Cardiac septum (tissue), 1 donor: ENCODE measurements at regions of chr17 and their contacts with region 1.

Region 1: DNA sequence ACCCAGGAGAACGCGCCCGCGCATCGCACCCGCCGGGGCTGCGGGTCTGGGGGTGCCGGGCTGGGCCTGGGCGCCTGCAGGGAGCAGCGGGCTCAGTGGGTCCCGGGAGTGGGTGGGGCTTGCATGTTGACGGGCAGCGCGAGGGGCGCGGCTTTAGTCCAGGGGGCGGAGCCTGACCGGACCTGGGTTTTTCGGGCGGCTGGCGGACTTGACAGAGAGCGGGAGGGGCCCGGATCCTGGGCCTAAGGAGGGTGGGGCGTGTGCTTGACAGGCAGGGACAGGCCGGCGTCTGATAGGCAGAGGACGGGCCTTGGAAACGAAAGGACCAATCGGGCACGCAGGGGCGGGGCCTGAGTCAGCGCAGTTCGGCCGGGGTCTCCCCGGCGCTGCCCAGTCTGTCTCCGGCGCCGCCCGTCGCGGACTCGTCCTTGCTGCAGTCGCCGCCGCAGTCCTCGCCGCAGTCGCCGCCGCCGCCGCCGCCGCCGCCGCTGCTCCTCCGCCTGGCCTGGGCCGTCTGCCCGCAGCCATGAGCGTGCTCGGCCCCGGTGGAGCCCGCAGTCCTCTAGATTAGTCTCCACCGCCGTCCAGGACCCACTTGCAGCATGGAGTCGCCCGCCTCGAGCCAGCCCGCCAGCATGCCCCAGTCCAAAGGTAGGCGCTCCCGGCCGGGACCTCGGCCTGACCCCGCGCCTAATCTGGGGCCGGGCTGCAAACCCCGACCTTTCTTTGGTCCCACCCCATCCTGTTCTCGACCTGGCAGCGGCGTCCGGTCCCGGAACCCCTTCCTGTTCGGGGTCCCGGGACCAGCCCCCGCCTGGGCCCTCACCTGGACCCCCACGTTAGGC is at the start of gene MAP2K3:
- DNase-seq: peak; percentile 100
- total RNA-seq, gene MAP2K3: 70.5 TPM

Region 2: GRCh38 chr17:21043286-21044232 is 241.0 kb before region 1 on chr17:
- intact Hi-C with region 1: loop called (anchors 2 kb)
- DNase-seq: peak; percentile 98

Region 3: GRCh38 chr17:21126645-21127510 is 157.7 kb before region 1 on chr17 and contains the start of gene DHRS7B:
- intact Hi-C with region 1: loop called (anchors 5 kb)
- DNase-seq: peak; percentile 98
- total RNA-seq, gene DHRS7B: 37.4 TPM

Region 4: GRCh38 chr17:21166595-21167210 is 117.8 kb before region 1 on chr17:
- intact Hi-C with region 1: loop called (anchors 2 kb)
- DNase-seq: no peak

Region 5: GRCh38 chr17:21318439-21318838 is 33.9 kb after region 1 on chr17:
- intact Hi-C with region 1: loop called (anchors 5 kb)
- DNase-seq: no peak

Region 6: DNA sequence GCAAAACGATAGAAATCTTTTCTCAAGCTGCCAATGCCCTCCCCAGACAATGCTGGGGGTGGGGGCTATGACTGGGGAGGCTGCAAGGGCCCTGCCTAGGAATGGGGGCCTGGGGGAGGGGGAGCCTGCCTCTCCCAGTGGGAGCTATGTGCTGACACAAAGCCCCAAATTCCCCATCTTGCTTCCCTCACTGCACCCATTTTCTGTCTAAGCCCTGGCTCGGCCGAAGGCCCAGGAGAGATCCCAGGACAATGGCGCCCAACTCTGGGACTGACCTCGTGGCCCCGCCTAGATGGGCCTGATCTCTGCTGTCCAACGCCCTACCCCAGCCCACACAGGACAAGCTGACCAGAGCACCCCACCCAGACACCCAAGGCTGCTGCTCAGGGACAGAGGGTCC is 80.5 kb after region 1 on chr17:
- intact Hi-C with region 1: no loop called
- DNase-seq: no peak

Region 7: DNA sequence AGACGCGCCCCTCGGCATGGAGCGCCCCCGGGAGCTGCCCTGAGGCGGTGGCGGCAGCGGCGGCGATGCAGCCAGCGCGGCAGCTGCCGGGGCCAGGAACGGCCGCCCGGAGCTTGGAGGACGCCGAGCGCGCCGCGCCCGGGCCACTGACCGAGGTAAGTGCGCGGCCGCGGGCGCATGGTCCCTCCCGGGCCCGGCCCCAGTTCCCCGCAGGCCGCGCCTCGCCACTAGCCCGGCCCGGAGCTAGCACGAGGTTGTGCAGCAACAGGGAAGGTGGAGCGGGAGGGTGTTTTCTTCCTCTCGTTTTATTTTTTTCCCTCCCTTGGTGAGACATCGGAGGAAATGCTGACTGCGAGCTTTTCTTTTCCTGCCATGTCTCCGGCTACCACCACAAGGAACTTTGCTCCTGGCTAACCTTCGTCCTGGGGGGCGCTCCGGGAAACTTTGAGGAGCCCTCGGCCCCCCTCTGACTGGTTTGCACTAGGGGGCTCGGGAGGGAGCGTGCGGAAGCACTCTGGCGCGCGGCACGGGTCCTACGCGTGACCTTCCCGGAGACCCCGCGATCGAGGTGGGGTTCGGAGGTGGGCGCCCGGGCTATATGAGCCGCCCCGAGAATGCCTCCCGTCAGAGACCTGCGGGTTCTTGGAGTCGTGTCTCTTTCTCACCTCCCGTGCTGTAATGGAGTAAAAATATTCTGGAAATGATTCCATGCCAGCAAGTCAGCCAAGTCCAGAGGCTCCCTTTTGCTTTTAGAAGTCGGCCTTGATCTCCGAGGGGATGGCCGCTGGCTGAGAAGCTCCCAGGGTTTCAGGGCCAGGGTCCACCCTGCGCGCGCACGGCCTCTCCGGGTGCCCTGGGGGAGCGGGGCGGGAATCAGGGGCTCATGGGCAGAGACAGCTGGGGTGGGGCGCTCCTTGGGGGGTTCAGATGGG is 92.5 kb after region 1 on chr17:
- intact Hi-C with region 1: loop called (anchors 5 kb)
- DNase-seq: no peak

Region 8: DNA sequence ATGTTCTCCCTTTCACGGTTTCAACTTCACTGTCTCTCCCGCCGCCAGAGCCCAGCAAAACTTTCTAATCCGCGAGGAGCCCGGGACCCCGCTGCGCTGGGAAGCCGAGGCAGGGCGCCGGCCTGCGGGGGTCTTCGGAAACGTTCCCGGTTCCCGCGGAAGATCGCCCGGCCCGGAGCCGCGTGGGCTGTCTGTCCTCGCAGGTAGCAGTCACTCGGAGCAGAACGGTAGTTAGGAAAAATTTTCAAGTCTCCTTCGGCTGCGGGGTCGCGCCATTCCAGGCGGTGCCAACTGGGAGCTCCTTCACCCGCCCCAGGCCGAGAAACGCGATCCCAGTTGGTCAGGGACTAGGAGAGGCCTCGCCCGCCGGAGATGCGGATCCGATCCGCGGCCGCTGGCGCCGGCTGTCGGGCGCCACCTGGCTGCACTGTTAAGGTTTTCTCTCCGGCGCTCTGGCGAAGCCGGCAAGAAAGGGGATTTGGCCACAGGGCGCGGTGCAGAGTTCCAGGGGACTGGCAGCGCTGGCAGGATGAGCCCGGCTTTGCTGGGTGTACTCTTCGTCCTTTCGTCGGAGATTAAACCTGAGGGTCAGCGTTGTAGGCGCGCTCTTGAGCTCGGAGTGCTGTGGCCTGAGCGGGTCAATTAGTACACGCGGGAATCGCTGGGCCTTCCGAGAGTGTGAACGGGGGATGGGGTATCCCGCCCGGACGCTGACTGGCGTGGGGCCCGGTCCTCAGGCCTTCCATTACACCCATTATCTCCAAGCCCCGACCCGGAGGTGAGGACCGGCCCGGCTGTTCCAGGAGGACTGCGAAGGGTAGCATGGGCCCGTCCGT is 227.0 kb after region 1 on chr17:
- intact Hi-C with region 1: loop called (anchors 2 kb)
- DNase-seq: peak; percentile 92